ENCODE measurements at regions of chr5 and their contacts with region 1.

Region 1: DNA sequence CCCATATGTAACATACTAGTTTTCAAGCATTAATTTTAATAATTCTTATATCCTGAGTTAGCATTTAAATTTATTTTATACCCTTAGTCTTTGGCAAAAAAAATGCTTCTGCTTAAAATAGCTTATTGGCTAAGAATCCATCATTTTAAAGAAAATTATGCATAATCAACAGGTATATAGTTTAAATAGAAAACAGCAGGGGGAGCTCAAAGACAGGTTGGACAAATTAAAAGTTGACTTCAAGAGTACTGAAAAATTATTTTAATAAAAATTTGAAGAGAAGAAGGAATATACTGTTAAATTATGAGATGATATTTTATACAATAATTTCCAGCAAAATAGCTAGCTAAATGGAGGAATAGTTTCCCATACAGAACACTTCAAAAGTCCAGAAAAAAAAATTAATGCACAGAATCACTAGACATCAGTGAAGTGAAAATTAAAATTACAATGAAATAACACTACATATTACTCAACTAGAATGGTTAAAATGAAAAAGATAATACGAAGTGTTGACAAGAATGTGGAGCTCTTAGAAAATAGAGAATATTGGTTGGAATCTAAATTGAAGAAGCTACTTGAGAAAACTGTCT is 387.1 kb downstream of the PDE4D start:
- DNase-seq: no peak
- H3K4me3 Mint-ChIP-seq: no peak overlapping the region
- H3K27ac Mint-ChIP-seq: no peak overlapping the region
- H3K4me1 Mint-ChIP-seq: peaks cover 9% of the 10 kb centered on the region
- H3K27me3 Mint-ChIP-seq: peaks cover 12% of the 10 kb centered on the region

Region 2: GRCh38 chr5:59193616-59194319 is 312.6 kb before region 1 on chr5:
- intact Hi-C with region 1: no loop called
- DNase-seq: no peak
- H3K4me3 Mint-ChIP-seq: no peak overlapping the region
- H3K27ac Mint-ChIP-seq: no peak overlapping the region
- H3K4me1 Mint-ChIP-seq: peaks cover 5% of the 10 kb centered on the region
- H3K27me3 Mint-ChIP-seq: peaks cover 24% of the 10 kb centered on the region

Region 3: GRCh38 chr5:59569608-59570334 is 63.4 kb after region 1 on chr5:
- intact Hi-C with region 1: no loop called
- DNase-seq: no peak
- H3K4me3 Mint-ChIP-seq: no peak overlapping the region
- H3K27ac Mint-ChIP-seq: no peak overlapping the region
- H3K4me1 Mint-ChIP-seq: no peaks in the 10 kb centered on the region
- H3K27me3 Mint-ChIP-seq: peaks cover 4% of the 10 kb centered on the region

Region 4: DNA sequence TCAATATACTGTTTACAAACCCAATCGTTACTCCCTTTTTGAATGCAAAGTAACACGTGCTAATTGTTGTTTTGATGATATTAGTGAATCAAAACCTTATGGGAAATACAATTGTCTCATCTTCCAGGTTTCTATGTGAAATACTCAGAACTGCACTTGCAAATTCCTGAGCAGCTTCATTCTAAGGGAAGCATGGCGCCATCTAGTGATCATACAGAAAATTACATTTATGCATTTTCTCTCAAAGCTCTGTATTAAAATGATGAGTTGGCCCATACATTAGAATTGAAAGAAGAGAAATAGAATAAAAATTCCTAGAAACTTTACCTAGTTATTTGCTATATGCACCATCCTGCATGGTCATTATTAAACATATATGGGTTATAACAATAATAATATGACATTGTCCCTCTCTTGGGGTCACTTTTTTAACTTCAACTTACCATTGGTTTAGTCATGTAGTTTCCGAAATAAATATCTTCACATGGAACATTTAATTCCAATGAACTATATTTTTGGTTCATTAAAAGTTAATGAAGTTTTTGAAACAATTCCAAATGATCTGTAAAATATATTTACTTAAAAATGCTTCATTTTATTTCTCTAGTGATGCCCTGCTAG is 167.2 kb after region 1 on chr5:
- intact Hi-C with region 1: loop called (anchors 1 kb)
- DNase-seq: no peak
- H3K4me3 Mint-ChIP-seq: no peak overlapping the region
- H3K27ac Mint-ChIP-seq: no peak overlapping the region
- H3K4me1 Mint-ChIP-seq: peaks cover 4% of the 10 kb centered on the region
- H3K27me3 Mint-ChIP-seq: peaks cover 6% of the 10 kb centered on the region

Region 5: DNA sequence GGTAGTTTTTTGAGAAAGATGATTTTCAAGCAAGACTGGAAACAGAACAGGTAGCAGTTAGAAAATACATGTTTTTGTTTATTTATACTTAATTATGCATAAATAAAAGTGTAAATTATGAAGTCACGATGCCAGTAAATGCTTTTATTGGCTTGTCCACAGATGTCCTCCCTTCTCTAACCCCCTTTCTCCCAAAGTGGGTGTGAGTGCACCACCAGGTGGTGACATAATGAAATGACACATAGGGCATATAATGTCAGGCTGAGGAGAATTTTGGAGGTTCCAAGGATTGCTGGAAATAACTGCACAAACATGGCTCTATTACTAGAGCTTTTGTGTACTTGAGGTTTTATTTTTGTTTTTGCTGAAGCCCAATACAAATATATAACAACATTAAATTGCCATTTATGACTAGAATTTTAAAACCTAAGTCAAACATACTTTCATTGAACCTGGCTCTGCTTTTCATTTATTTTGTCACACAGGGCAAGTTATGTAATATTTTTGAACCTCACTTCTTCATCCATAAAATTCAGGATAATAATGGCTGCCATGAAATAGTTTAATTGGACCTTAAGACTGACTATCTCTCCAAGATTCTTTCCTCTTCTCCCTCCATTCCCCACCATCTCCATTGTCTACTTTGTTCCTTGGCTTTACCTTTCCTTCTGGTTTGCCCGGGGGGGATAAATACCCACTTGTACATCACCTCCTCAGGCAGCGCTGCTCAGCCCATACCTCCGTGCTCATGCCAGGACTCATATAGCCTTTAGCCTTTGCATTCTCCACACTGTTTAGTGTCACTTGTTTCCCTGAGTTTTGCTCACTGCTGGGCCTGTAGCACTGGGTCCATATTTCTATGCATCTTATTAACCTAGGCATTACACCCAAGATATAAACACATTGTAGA is 218.4 kb after region 1 on chr5:
- intact Hi-C with region 1: loop called (anchors 1 kb)
- DNase-seq: no peak
- H3K4me3 Mint-ChIP-seq: no peak overlapping the region
- H3K27ac Mint-ChIP-seq: no peak overlapping the region
- H3K4me1 Mint-ChIP-seq: no peaks in the 10 kb centered on the region
- H3K27me3 Mint-ChIP-seq: peaks cover 7% of the 10 kb centered on the region

Region 6: DNA sequence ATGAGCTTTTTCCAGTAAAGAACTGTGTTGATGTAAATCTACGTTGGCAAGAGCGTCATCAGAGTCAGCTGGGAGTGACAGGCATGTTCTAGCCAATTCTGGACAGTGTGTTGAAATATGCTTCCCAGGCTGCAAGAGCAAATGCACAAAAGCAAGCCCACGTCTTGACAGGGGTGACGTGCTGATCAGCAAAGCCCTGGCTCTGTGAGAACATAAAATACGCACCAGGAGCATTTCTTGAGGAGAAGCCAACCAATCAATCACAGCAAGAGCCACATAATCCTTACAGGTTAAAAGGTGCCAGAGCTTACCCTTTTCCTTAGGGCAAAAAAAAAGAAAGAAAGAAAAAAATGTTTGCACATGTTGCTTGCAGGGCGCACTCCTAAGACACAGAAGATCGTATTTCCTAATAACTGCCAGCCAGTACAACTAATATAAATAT is 239.1 kb after region 1 on chr5:
- intact Hi-C with region 1: no loop called
- DNase-seq: no peak
- H3K4me3 Mint-ChIP-seq: no peak overlapping the region
- H3K27ac Mint-ChIP-seq: no peak overlapping the region
- H3K4me1 Mint-ChIP-seq: no peaks in the 10 kb centered on the region
- H3K27me3 Mint-ChIP-seq: peaks cover 2% of the 10 kb centered on the region

Measured in activated T-helper 1 cell treated with anti-CD3 and anti-CD28 coated beads, Interleukin-12 subunit alpha, Interleukin-12 subunit beta, Interleukin-2, Interleukin-4 antibody, amounts not matched to agents 30 ng/mL and 10 ng/mL and 1 ng/mL, durations not matched to agents 14 hours and 24 hours and 36 hours (primary cell).